Activated CD8-positive, alpha-beta T cell treated with anti-CD3 and anti-CD28 coated beads for 36 hours (primary cell): ENCODE measurements at regions of chr12 and their contacts with region 1.

Region 1: DNA sequence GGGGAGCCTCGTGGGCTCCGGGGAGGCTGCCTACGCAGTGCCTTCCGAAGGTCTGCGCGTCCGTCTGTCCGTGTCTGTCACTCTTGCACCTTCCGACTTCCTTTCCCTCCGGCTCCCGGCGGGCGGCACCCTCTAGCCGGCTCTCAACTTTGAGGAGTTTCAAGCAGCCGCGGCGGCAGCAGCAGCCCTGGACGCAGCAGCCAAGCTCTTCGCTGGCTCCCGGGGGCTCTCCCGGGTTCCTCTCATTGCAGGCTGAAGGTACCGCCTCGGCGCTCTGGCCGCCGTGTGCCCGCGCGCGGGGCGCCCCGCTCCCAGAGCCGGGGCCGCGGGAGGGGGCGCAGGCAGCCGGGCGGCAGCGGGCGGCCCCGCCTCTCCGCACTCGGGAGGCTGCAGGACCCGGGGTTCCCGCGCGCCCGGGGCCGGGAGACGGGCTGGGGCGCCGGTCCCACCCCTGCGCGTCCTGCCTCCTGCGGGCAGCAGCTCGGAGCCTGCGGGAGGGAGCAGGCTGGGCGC is at the starts of genes AMIGO2 and PCED1B:
- DNase-seq: peak; percentile 82
- ATAC-seq: peak; percentile 57
- H3K4me3 Mint-ChIP-seq: peak within 1 kb of the TSS; percentile 92
- H3K27ac Mint-ChIP-seq: peak within 1 kb of the TSS; percentile 97
- H3K4me1 Mint-ChIP-seq: peaks cover 72% of the 10 kb centered on the region
- H3K27me3 Mint-ChIP-seq: no peaks in the 10 kb centered on the region
- CTCF ChIP-seq: no peak
- total RNA-seq, gene AMIGO2: 12.1 to 12.5 TPM
- total RNA-seq, gene PCED1B: 117 to 119 TPM

Region 2: GRCh38 chr12:46617167-46617566 is 462.4 kb before region 1 on chr12:
- CTCF ChIA-PET with region 1: no interaction called
- POLR2A ChIA-PET with region 1: no interaction called
- intact Hi-C with region 1: no loop called
- DNase-seq: no peak
- ATAC-seq: no peak
- H3K4me3 Mint-ChIP-seq: no peak overlapping the region
- H3K27ac Mint-ChIP-seq: no peak overlapping the region
- H3K4me1 Mint-ChIP-seq: no peaks in the 10 kb centered on the region
- H3K27me3 Mint-ChIP-seq: no peaks in the 10 kb centered on the region
- CTCF ChIP-seq: no peak

Region 3: GRCh38 chr12:47039756-47040155 is 39.8 kb before region 1 on chr12:
- CTCF ChIA-PET with region 1: no interaction called
- POLR2A ChIA-PET with region 1: no interaction called
- intact Hi-C with region 1: no loop called
- DNase-seq: no peak
- ATAC-seq: no peak
- H3K4me3 Mint-ChIP-seq: no peak overlapping the region
- H3K27ac Mint-ChIP-seq: no peak overlapping the region
- H3K4me1 Mint-ChIP-seq: peaks cover 16% of the 10 kb centered on the region
- H3K27me3 Mint-ChIP-seq: no peaks in the 10 kb centered on the region
- CTCF ChIP-seq: no peak

Region 4: GRCh38 chr12:47207340-47207717 is 127.8 kb after region 1 on chr12:
- CTCF ChIA-PET with region 1: interaction called, 9 read pairs
- POLR2A ChIA-PET with region 1: interaction called, 170 read pairs
- intact Hi-C with region 1: loop called (anchors 5 kb)
- DNase-seq: peak; percentile 76
- ATAC-seq: peak; percentile 60
- H3K4me3 Mint-ChIP-seq: peak overlapping the region; percentile 79
- H3K27ac Mint-ChIP-seq: peak overlapping the region; percentile 96
- H3K4me1 Mint-ChIP-seq: peaks cover 69% of the 10 kb centered on the region
- H3K27me3 Mint-ChIP-seq: no peaks in the 10 kb centered on the region
- CTCF ChIP-seq: no peak

Region 5: DNA sequence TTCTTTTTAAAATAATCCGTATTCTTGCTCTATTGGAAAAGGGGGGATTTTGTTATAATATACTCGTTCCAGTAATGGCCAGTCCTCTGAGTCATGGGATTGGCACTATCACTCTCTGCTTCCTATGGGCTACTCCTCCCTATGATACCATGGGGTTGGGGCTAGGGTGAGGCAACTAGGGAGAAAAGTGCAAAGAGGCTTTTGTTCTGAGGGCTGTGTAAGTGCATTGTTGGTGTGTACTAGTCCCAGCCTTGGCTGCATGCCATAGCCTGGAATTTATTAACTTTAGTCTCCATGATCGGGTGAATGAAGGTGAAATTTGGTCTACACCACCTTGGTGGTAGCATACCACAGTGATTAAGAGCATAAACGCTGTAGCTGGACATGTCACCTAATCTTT is 378.7 kb after region 1 on chr12:
- CTCF ChIA-PET with region 1: no interaction called
- POLR2A ChIA-PET with region 1: no interaction called
- intact Hi-C with region 1: no loop called
- DNase-seq: no peak
- ATAC-seq: no peak
- H3K4me3 Mint-ChIP-seq: no peak overlapping the region
- H3K27ac Mint-ChIP-seq: no peak overlapping the region
- H3K4me1 Mint-ChIP-seq: peaks cover 3% of the 10 kb centered on the region
- H3K27me3 Mint-ChIP-seq: no peaks in the 10 kb centered on the region
- CTCF ChIP-seq: no peak